Dorsolateral prefrontal cortex (tissue), 120 donors: ENCODE measurements at regions of chr6 and their contacts with region 1.

Region 1: GRCh38 chr6:15441215-15441868 is 195.5 kb downstream of the JARID2 start:
- DNase-seq: peak in 1 of 10 donors; percentile 53
- H3K4me3 ChIP-seq: no peak overlapping the region
- H3K27ac ChIP-seq: no peak overlapping the region
- H3K27me3 ChIP-seq: no peaks in the 10 kb centered on the region
- CTCF ChIP-seq: peak; percentile 54 to 88 (median 80)

Region 2: DNA sequence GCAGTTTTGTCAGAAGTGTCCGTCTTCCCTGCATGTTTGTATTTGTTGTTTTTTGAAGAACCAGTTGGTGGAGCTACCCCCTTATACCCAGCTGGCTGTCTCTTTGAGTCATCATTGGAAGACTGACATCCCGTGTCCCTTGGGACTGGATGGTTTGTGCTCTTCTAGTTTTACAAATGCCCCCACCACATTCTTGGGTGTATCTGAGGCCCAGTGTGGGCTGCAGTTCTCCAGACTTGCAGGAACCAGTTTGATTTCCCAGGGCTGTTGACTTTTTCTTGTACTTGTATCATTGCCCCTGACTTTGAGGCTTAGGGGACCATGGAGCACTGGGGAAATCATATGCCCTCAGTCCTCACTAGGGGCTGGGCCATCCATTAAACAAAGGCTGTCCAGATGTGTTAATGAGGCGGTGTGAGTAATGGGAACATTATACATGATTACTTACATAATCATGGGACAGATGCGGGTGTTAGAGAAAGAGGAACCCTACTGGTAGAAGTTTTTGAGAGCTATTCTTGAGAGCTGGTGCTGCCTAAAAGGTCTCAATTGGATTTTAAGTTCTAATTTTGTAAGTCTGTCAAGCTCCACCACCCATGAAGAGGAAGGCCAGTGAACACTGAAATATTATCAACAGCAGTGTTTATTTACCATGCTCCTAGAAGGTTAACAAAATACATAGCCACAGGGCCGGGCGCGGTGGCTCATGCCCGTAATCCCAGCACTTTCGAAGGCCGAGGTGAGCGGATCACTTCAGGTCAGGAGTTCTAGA is 187.1 kb before region 1 on chr6:
- intact Hi-C with region 1: loop called (anchors 5 kb)
- DNase-seq: peak in 1 of 10 donors; percentile 47
- H3K4me3 ChIP-seq: peak overlapping the region in 1 of 59 donors; percentile 5
- H3K27ac ChIP-seq: peak overlapping the region in 57 of 59 donors; percentile 18 to 99 (median 67)
- H3K27me3 ChIP-seq: no peaks in the 10 kb centered on the region
- CTCF ChIP-seq: peak in 53 of 56 donors; percentile 23 to 77 (median 53)

Region 3: DNA sequence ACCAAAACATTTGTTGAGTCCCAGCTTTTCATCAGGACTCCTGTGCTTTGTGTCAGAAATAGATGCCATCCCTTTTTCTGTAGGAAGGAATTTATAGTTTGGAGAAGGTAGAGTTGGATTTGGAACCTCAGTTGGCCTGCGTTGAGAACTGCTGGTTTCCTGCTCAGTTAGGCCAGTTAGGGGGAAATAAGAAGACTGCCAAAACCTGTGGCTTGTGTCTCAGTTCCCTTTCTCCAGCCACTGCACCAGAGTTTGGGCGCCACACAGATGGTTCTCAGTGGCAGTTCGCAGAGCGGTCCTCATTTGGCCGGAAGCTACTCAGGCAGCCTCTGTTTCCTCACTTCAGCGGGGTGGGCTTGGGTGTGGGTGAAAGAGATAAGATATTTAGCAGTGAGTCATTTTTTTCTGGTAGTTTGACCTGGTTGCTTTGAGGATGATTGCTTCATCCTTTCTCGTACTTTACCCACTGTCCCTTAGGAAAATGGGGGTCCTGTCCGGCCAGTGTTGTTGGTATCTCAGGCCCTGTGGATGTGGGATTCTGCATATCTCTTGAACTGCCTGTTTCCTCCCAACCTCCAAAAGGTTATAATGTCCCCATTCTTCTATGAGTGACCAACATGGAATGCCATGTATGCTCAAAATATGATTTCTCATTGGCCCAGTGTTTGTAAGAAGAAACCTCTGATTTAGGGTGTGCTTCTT is 141.8 kb before region 1 on chr6:
- intact Hi-C with region 1: no loop called
- DNase-seq: peak in 1 of 10 donors; percentile 48
- H3K4me3 ChIP-seq: no peak overlapping the region
- H3K27ac ChIP-seq: peak overlapping the region in 3 of 59 donors; percentile 8 to 40 (median 10)
- H3K27me3 ChIP-seq: no peaks in the 10 kb centered on the region
- CTCF ChIP-seq: no peak

Region 4: GRCh38 chr6:15327271-15327670 is 114.1 kb before region 1 on chr6:
- intact Hi-C with region 1: loop called in 1 of 2 experiments (anchors 5 kb)
- DNase-seq: peak in 1 of 10 donors; percentile 44
- H3K4me3 ChIP-seq: no peak overlapping the region
- H3K27ac ChIP-seq: no peak overlapping the region
- H3K27me3 ChIP-seq: no peaks in the 10 kb centered on the region
- CTCF ChIP-seq: peak in 11 of 56 donors; percentile 8 to 37 (median 19)

Region 5: DNA sequence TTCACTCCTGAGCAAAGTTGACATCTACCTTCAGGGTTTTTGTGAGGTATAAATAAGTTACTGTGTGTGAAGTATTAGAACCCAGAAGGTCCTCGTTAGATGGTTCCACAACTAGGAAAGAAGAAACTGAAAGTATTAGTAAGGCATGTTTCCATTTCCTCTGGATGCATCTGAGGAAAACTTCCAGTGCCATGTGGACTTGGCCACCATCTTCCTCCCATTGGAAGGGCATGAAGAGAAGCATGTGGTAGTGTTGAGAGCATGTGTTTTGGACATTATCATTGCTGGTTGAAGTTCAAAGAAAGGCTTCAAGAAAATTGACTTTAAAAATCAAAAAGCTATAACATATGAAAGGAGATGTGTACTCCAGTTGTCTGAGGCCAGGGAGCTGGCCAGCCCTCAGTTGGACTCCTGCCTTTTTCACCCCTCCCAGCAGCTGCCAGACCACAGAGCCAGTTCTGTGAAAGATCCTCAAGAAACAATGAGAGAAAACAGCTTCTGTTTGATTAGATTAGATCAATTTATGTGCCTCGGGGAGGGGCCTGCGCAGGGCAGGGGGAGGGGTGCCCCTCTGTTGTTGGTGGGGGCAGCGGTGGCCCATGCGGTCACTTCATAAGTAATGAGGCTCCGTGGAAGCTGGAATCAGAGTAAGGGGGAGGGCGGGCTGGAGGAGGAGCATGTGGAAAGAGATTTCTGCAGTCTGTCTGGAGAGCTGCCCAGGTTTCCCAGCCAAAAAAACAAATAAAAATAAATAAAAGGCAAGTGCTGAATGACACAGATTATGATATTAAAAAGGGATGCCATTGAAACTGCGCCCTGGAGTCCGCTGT is 41.5 kb before region 1 on chr6:
- intact Hi-C with region 1: loop called in 1 of 2 experiments (anchors 1 kb)
- DNase-seq: peak; percentile 66 to 88 (median 79)
- H3K4me3 ChIP-seq: peak overlapping the region; percentile 38 to 74 (median 59)
- H3K27ac ChIP-seq: peak overlapping the region; percentile 46 to 96 (median 89)
- H3K27me3 ChIP-seq: no peaks in the 10 kb centered on the region
- CTCF ChIP-seq: peak in 5 of 56 donors; percentile 8 to 16 (median 13)

Region 6: GRCh38 chr6:15491255-15491985 is 50.1 kb after region 1 on chr6:
- intact Hi-C with region 1: loop called (anchors 5 kb)
- DNase-seq: peak; percentile 70 to 89 (median 83)
- H3K4me3 ChIP-seq: peak overlapping the region in 3 of 59 donors; percentile 0 to 6 (median 3)
- H3K27ac ChIP-seq: peak overlapping the region in 17 of 59 donors; percentile 1 to 67 (median 32)
- H3K27me3 ChIP-seq: no peaks in the 10 kb centered on the region
- CTCF ChIP-seq: peak; percentile 74 to 99 (median 96)

Region 7: DNA sequence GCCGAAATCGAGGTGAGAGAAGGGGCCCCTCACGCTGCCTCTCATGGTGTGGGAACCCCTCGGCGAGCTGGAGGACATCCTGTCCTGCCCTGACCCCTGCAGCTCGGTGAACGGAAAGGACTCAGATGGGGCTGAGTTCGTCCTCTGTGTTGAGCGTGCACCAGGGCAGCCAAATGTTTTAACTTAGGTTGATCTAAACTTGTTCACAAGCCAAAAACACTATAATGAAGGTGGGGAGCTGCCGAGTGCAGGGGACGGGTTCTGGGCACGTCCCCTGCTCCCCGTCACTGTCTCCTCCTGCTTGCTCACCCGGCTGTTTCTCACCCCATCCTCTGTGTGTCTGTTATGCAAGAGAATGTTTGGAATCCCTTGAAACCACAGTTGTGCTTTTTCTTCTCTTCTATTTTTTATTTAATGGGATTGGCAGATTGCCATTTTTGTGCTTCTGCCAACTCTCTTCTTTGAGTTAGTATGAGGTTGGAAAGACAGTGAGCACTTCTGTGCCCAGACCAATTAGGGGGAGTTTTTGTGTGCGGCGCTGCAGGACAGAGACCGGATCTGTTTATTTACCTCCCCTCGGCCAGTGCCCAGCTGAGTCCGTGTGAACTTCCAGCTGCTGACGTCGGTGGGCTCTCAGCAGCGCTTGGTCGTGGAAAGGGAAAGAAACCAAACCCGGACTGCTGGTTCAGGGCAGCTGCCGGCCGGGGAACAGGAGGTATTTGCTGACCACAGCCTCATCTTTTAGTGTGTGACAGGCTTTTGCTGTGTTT is 63.4 kb after region 1 on chr6:
- intact Hi-C with region 1: loop called in 1 of 2 experiments (anchors 5 kb)
- DNase-seq: peak; percentile 35 to 80 (median 68)
- H3K4me3 ChIP-seq: peak overlapping the region in 48 of 59 donors; percentile 0 to 49 (median 27)
- H3K27ac ChIP-seq: peak overlapping the region in 57 of 59 donors; percentile 2 to 87 (median 68)
- H3K27me3 ChIP-seq: no peaks in the 10 kb centered on the region
- CTCF ChIP-seq: peak in 20 of 56 donors; percentile 1 to 40 (median 16)

Region 8: GRCh38 chr6:15547400-15547799 is 106.1 kb after region 1 on chr6:
- intact Hi-C with region 1: no loop called
- DNase-seq: no peak
- H3K4me3 ChIP-seq: no peak overlapping the region
- H3K27ac ChIP-seq: no peak overlapping the region
- H3K27me3 ChIP-seq: no peaks in the 10 kb centered on the region
- CTCF ChIP-seq: no peak

Region 9: GRCh38 chr6:16019462-16019861 is 578.1 kb after region 1 on chr6:
- intact Hi-C with region 1: no loop called
- DNase-seq: no peak
- H3K4me3 ChIP-seq: no peak overlapping the region
- H3K27ac ChIP-seq: no peak overlapping the region
- H3K27me3 ChIP-seq: peaks cover 0 to 6% (median 0%) of the 10 kb centered on the region in 45 donors
- CTCF ChIP-seq: no peak